GM12878 (cell line): ENCODE measurements at regions of chr6 and their contacts with region 1.

Region 1: DNA sequence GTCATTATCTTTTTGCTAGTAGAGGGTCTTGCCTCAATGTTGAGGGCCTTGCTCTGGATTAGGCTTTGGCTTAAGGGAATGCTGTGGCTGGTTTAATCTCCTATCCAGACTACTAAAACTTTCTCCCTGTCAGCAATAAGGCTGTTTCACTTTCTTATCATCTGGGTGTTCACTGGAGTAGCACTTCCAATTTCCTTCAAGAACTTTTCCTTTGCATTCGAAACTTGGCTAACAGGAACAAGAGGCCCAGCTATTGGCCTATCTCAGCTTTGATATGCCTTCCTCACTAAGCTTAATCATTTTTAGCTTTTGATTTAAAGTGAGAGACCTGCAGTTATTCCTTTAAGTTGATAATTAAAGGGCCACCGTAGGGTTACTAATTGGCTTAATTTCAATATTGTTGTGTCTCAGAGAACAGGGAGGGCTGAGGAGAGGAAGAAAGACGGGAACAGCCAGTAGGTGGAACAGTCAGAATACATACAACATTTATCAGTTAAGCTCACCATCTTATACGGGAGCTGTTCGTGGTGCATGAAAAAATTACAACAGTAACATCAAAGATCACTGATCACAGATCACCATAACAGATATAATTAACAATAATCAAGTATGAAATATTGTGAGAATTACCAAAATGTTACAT is 186.7 kb downstream of the PTPRK start:
- DNase-seq: no peak
- ATAC-seq: no peak
- H3K4me3 ChIP-seq: no peak overlapping the region
- H3K27ac ChIP-seq: no peak overlapping the region
- H3K4me1 ChIP-seq: no peaks in the 10 kb centered on the region
- H3K27me3 ChIP-seq: no peaks in the 10 kb centered on the region
- CTCF ChIP-seq: no peak
- EP300 ChIP-seq: no peak
- POLR2A ChIP-seq: no peak
- RAD21 ChIP-seq: no peak

Region 2: DNA sequence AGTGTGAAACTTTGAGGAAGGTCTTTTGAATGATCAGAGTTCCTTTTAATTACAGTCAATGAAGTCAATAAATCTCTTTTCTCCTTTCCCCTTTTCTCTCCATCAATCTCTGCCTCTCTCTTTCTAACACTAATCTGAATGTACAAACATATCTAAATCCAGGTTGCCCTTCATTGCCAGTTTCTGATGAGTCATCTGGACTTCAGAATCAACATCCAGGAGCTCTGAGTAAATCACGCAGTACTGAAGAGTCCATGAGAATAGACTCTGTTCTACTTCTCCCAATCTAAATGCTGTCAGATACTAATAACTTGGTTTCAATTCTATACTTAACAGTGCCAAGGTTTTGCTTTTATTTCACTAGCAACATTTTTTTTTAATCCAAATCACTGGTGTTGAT is 194.2 kb before region 1 on chr6:
- CTCF ChIA-PET with region 1: no interaction called
- POLR2A ChIA-PET with region 1: no interaction called
- RAD21 ChIA-PET with region 1: no interaction called
- SMC1A ChIA-PET with region 1: no interaction called
- in situ Hi-C with region 1: no loop called
- intact Hi-C with region 1: no loop called
- DNase-seq: no peak
- ATAC-seq: no peak
- H3K4me3 ChIP-seq: no peak overlapping the region
- H3K27ac ChIP-seq: no peak overlapping the region
- H3K4me1 ChIP-seq: no peaks in the 10 kb centered on the region
- H3K27me3 ChIP-seq: no peaks in the 10 kb centered on the region
- CTCF ChIP-seq: no peak
- EP300 ChIP-seq: no peak
- POLR2A ChIP-seq: no peak
- RAD21 ChIP-seq: no peak

Region 3: GRCh38 chr6:128350416-128351254 is 16.9 kb after region 1 on chr6:
- CTCF ChIA-PET with region 1: no interaction called
- POLR2A ChIA-PET with region 1: no interaction called
- RAD21 ChIA-PET with region 1: no interaction called
- SMC1A ChIA-PET with region 1: no interaction called
- in situ Hi-C with region 1: no loop called
- intact Hi-C with region 1: no loop called
- DNase-seq: no peak
- ATAC-seq: no peak
- H3K4me3 ChIP-seq: no peak overlapping the region
- H3K27ac ChIP-seq: no peak overlapping the region
- H3K4me1 ChIP-seq: no peaks in the 10 kb centered on the region
- H3K27me3 ChIP-seq: no peaks in the 10 kb centered on the region; a peak in 1 of 4 replicates
- CTCF ChIP-seq: no peak
- EP300 ChIP-seq: no peak
- POLR2A ChIP-seq: no peak
- RAD21 ChIP-seq: no peak

Region 4: GRCh38 chr6:128731249-128732165 is 397.8 kb after region 1 on chr6:
- CTCF ChIA-PET with region 1: no interaction called
- POLR2A ChIA-PET with region 1: no interaction called
- RAD21 ChIA-PET with region 1: no interaction called
- SMC1A ChIA-PET with region 1: no interaction called
- in situ Hi-C with region 1: no loop called
- intact Hi-C with region 1: loop called (anchors 5 kb)
- DNase-seq: no peak
- ATAC-seq: peak; percentile 77
- H3K4me3 ChIP-seq: no peak overlapping the region
- H3K27ac ChIP-seq: no peak overlapping the region
- H3K4me1 ChIP-seq: no peaks in the 10 kb centered on the region
- H3K27me3 ChIP-seq: no peaks in the 10 kb centered on the region
- CTCF ChIP-seq: peak; percentile 37 to 63 (median 43); a peak in 4 of 6 replicates
- EP300 ChIP-seq: no peak
- POLR2A ChIP-seq: no peak
- RAD21 ChIP-seq: peak; percentile 64